ENCODE measurements at regions of chr11 and their contacts with region 1.

Region 1: GRCh38 chr11:40306938-40307548 is 1152.4 kb downstream of the LRRC4C start:
- DNase-seq: peak; percentile 87
- H3K4me3 ChIP-seq: no peak overlapping the region
- H3K27ac ChIP-seq: no peak overlapping the region
- H3K4me1 ChIP-seq: peaks cover 9% of the 10 kb centered on the region
- H3K27me3 ChIP-seq: no peaks in the 10 kb centered on the region
- CTCF ChIP-seq: peak; percentile 99

Region 2: GRCh38 chr11:40722179-40722795 is 415.2 kb after region 1 on chr11:
- CTCF ChIA-PET with region 1: interaction called, 3 read pairs
- POLR2A ChIA-PET with region 1: no interaction called
- intact Hi-C with region 1: loop called (anchors 1 kb)
- DNase-seq: peak; percentile 89
- H3K4me3 ChIP-seq: no peak overlapping the region
- H3K27ac ChIP-seq: no peak overlapping the region
- H3K4me1 ChIP-seq: no peaks in the 10 kb centered on the region
- H3K27me3 ChIP-seq: no peaks in the 10 kb centered on the region
- CTCF ChIP-seq: peak; percentile 99